ENCODE measurements at regions of chr22 and their contacts with region 1.

Region 1: DNA sequence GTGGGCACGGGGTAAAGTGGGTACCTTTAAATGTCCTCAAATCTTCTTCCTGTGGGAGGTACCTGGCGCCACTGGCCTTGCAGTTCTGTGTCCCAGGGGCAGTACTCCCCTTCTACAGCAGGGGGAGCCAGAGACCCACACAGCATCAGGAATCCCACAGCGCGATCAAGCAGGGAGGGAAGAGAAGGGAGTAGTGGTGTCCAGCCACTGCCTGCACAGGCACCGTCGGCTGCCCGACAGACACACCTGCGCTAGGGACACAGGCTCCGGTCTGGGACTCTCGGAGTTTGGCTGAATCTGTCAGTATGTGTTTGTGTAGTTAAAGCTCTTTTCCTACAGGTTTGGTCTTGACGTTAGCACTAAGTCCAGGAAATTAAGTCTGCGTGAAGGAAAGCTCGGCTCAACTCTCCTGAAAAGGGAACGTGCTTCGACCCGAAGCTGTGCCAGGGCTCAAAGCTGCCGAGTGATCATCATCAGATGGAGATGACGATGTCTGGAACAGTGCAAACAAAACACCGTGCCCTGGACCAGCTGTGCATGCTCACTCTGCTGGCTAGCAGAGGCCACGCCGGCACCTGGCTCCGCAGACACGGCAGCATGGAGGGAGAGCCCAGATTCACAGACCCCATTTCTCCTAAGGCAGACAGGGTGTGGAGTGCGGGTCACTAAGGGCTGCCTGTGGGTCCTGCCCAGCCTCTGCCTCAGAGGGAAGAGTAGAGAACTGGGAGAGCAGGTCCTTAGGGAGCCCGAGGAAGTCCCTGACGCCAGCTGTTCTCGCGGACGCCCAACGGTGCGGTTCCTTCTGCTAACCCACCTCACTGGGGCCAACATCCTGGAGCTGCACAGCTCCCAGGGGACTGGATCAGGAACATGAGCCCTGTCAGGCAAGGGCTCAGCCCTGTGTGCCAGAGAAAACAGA is 56.0 kb upstream of the BID start:
- DNase-seq: peak; percentile 89
- CTCF ChIP-seq: peak; percentile 98

Region 2: DNA sequence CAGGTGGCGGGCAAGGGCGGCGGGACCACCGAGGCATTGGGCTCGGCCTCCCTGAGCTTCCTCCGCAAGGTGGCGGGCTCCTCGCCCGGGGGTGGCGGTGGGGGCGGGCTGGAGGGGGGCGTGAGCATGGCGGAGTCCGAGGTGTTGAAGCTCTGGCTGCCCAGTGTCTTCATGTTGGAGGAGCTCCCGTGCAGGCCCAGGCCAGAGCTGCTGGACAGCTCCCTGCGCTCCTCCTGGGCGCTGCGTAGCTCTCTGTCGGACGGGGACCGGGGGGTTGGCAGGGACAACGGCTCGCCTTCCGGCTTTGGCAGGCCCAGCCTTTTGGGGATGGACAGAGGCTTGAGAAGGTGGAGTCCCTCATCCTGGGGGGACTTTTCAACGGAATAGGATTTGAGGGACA is 12.1 kb before region 1 on chr22:
- CTCF ChIA-PET with region 1: interaction called, 21 read pairs
- POLR2A ChIA-PET with region 1: no interaction called
- DNase-seq: no peak
- CTCF ChIP-seq: no peak

Region 3: GRCh38 chr22:17842386-17842785 is 12.1 kb after region 1 on chr22:
- CTCF ChIA-PET with region 1: interaction called, 13 read pairs
- POLR2A ChIA-PET with region 1: no interaction called
- DNase-seq: peak; percentile 39
- CTCF ChIP-seq: no peak

Region 4: DNA sequence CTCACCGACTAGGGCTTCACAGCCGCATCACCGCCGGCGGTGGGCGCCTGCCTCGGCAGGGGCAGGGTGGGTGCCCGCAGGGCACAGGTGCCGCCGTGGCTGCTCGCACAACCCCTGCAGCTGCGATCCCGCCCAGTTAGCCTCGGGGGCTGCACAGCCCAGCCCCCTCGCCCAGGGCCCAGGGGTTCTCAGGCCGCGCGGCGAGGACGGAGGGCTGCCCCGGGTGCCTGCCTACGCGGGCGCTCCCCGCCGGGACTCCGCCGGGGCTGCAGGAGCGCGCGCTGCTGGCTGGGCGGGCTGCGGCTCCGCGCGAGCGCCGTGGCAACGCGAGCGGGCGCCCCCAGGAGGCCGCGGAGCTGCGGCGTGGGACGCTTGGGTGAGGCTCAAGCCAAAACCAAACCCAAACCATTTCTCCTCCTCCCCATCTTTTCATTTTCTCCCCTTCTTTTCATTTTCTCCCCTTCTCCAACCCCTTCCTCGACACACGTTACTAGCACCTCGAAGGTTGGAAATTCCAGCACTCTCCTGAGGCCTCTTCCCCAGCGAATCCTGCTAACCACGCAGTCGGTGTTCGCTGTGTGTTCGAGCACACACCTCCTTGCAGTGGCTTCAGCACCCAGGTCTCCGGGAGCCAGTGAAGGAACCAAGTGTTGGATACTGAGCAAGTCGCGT is 194.1 kb after region 1 on chr22 and contains the start of gene MICAL3:
- CTCF ChIA-PET with region 1: interaction called, 13 read pairs
- POLR2A ChIA-PET with region 1: no interaction called
- DNase-seq: peak; percentile 87
- CTCF ChIP-seq: peak; percentile 94

Region 5: GRCh38 chr22:18065256-18065655 is 235.0 kb after region 1 on chr22:
- CTCF ChIA-PET with region 1: interaction called, 249 read pairs
- POLR2A ChIA-PET with region 1: no interaction called
- DNase-seq: no peak
- CTCF ChIP-seq: no peak

Region 6: DNA sequence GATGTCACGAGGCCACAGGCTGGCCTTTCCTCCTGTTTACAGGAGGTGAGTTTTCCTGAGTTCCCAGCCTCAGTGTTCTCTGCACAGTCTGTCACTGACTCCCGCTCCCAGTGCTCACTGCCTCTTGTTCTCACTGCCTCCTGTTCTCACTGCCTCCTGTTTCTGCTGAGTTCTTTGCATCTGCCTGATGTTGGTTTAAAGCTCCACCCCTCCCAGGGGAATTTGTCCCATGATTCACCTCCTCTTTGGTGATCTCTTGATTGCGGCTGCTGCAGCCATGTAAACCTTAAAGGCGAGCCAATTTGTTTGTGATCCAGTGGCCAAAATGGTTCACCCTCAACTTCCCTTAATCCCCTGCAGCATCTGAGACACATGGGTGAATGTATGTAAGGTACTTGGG is 274.3 kb after region 1 on chr22:
- CTCF ChIA-PET with region 1: no interaction called
- POLR2A ChIA-PET with region 1: interaction called, 10 read pairs
- DNase-seq: no peak
- CTCF ChIP-seq: no peak

Region 7: DNA sequence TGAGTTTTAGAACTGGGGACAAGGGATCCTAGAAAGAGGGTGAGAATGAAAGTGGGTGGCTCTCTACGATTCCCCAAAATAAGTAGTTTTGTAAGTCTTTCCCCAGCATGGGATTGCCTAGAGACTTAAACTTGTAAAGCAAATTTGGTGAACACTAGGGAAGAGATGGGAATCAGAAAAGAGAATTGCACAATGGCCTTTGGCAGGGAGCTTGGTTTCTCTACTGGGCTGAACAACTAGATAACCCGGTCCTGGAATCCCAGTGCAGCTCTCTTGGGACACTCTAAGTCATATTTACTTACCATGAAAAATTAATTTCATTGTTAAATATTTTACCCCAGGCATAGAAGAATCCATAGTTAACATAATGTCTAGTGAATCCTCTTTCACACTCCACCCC is 303.1 kb after region 1 on chr22:
- CTCF ChIA-PET with region 1: no interaction called
- POLR2A ChIA-PET with region 1: no interaction called
- DNase-seq: no peak
- CTCF ChIP-seq: no peak